Cardiac septum (tissue), 1 donor: ENCODE measurements at regions of chr7 and their contacts with region 1.

Region 1: DNA sequence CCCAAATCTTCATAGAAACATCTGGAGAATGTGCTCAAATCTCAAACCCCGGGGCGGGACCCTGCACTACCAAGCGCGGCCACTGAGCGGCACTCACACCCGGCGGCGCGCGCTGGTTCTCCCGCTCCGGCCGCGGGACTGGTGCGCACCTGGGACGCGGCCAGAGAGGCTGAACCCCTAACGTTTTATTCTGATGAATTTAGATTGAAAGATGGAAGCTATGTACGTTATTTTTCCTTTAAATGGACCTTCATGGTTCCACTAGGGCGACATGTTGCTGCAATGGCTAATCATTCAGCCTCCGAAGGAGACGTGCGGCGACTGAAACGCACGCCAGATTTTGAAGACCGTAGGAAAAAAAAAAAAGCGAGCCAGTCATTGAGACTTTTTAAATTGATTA is 107.0 kb upstream of the INSIG1 start:
- DNase-seq: peak; percentile 84

Region 2: GRCh38 chr7:155141562-155141961 is 49.1 kb before region 1 on chr7:
- intact Hi-C with region 1: no loop called
- DNase-seq: no peak

Region 3: GRCh38 chr7:155344600-155345433 is 154.1 kb after region 1 on chr7:
- intact Hi-C with region 1: loop called (anchors 1 kb)
- DNase-seq: peak; percentile 89